Activated CD4-positive, alpha-beta T cell treated with anti-CD3 and anti-CD28 coated beads for 36 hours (primary cell): ENCODE measurements at regions of chr1 and their contacts with region 1.

Region 1: GRCh38 chr1:10507111-10507879 is 32.5 kb downstream of the PEX14 start:
- DNase-seq: peak; percentile 73
- ATAC-seq: peak; percentile 47
- H3K4me3 Mint-ChIP-seq: no peak overlapping the region
- H3K27ac Mint-ChIP-seq: no peak overlapping the region
- H3K4me1 Mint-ChIP-seq: peaks cover 51% of the 10 kb centered on the region
- H3K27me3 Mint-ChIP-seq: no peaks in the 10 kb centered on the region

Region 2: DNA sequence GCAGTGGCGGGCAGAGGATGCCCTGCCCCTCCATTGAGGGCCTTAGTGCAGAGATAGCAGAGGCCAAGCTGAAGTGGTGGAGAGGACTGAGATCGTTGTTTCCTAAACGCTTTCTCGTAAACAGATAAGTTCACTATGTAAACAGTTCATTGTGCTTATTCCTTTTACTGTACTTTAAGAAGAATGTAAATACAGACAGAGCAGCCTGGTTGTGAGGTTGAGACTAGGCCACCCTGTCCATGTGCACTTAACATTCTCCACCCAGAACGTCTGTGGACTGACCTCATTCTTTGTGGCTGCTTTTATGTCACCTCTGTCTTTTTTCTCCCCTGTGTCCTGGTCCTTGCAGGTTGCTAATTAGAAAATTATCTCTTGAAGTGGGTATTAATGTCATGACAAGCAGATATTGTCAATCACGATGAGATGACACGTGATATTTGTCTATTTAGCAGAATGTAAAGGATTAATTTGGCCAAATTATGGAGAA is 68.6 kb before region 1 on chr1:
- CTCF ChIA-PET with region 1: no interaction called
- POLR2A ChIA-PET with region 1: no interaction called
- intact Hi-C with region 1: no loop called
- DNase-seq: no peak
- ATAC-seq: no peak
- H3K4me3 Mint-ChIP-seq: no peak overlapping the region
- H3K27ac Mint-ChIP-seq: no peak overlapping the region
- H3K4me1 Mint-ChIP-seq: no peaks in the 10 kb centered on the region
- H3K27me3 Mint-ChIP-seq: no peaks in the 10 kb centered on the region

Region 3: DNA sequence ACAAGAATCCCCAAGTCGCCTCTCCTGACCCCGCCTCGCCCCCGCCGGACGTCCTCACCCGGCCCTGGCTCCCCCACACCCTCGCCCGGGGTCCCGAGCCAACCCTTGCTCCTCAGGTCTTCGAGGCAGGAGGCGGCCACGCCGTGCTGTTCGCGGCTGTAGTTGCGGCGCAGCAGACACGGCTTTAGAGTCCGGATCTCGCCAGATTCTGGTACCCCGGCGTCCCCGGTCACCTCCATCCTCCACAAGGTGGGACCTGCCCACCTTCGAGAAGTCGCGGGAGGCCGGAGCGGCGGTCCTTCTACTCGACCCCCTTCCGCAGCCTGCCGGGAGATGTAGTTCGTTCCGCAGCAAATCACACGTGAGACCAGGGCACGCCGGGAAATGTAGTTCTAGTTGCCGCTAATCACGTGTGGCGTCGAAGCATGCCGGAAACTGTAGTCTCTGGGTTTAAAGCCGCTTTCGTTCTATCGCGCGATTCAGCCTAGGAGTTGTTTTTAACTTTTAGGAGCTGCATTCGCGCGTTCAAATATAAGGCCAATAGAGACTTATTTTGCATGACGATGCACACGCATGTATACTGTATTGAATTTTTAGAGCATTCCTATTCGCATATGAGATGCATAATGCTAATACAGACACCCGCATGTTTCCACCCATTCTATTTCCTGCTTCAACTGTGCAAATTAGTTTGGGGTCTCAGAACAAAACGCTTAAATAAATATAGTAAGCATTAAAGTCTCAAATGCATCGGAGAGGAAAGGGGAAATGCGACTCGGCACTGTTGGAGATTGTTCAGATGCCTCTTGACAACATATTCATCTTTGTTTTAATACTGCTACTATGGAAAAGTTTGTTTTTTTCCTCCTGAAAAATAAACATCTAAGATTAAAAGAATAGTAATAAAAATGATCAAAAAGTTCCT is 34.8 kb before region 1 on chr1 and contains the start of gene DFFA:
- CTCF ChIA-PET with region 1: interaction called, 4 read pairs
- POLR2A ChIA-PET with region 1: no interaction called
- intact Hi-C with region 1: loop called (anchors 1 kb)
- DNase-seq: peak; percentile 96
- ATAC-seq: peak; percentile 83
- H3K4me3 Mint-ChIP-seq: peak within 1 kb of the TSS; percentile 97
- H3K27ac Mint-ChIP-seq: peak within 1 kb of the TSS; percentile 92
- H3K4me1 Mint-ChIP-seq: peaks cover 38% of the 10 kb centered on the region
- H3K27me3 Mint-ChIP-seq: no peaks in the 10 kb centered on the region
- total RNA-seq, gene DFFA: 45.7 to 46.4 TPM

Region 4: DNA sequence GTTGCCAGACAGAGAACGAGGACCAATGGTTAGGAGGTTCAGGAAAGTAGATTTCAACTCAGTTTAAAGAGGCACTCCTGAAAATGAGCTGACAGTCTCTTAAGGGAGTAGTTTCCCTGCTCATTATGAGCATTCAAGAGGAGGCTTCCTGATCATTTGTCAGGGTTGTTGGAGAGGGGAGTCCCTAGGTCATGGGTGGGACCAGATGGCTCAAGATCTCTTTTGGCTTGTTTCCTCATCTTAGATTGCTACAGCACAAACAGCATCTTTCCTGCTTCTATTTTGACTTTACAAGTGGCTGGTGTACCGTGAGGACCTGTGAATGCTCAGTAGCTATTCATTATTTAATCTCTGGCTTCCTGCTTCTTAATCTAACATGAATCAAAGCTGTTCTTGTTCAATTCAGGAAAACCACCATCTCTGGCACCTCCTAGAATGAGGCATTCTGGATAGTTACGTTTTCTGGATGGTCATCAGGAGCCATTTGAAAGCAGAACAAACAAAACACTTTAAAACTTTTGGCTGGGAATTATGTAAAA is 15.1 kb after region 1 on chr1:
- CTCF ChIA-PET with region 1: interaction called, 19 read pairs
- POLR2A ChIA-PET with region 1: interaction called, 4 read pairs
- intact Hi-C with region 1: no loop called
- DNase-seq: no peak
- ATAC-seq: no peak
- H3K4me3 Mint-ChIP-seq: no peak overlapping the region
- H3K27ac Mint-ChIP-seq: peak overlapping the region; percentile 39
- H3K4me1 Mint-ChIP-seq: peaks cover 35% of the 10 kb centered on the region
- H3K27me3 Mint-ChIP-seq: no peaks in the 10 kb centered on the region

Region 5: GRCh38 chr1:10731041-10731440 is 223.7 kb after region 1 on chr1:
- CTCF ChIA-PET with region 1: no interaction called
- POLR2A ChIA-PET with region 1: no interaction called
- intact Hi-C with region 1: loop called in 1 of 2 experiments (anchors 5 kb)
- DNase-seq: peak; percentile 29
- ATAC-seq: peak; percentile 63
- H3K4me3 Mint-ChIP-seq: no peak overlapping the region
- H3K27ac Mint-ChIP-seq: no peak overlapping the region
- H3K4me1 Mint-ChIP-seq: peaks cover 20% of the 10 kb centered on the region
- H3K27me3 Mint-ChIP-seq: no peaks in the 10 kb centered on the region

Region 6: DNA sequence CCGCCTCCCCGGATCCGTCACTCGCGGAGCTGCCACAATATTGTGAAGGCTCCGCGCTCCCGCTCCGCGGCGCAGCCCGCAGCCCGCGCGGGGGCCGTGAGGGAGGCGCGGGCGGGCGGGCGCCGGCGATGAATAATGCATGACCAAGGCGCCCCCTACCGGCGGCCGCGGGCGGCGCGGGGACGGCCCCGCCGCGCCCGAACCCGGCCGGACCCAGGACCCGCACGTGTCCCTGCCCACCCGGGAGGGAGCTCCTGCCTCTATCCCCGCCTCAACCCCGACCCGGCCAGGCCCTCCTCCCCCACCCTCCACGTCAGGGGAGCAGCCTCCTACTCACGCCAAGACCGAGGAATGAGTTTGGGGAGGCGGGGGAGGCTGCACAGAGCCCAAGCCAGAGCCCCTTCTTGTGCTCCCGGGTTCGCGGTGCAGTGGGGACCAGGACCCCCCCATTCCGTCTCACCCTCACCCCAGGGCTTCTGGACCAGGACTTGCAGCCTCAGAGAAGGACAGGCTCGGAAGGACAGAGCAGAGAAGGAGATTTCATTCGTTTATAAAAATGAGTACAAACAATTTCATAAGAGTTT is 359.9 kb after region 1 on chr1:
- CTCF ChIA-PET with region 1: interaction called, 8 read pairs
- POLR2A ChIA-PET with region 1: no interaction called
- intact Hi-C with region 1: loop called (anchors 2 to 5 kb)
- DNase-seq: peak; percentile 77
- ATAC-seq: peak; percentile 84
- H3K4me3 Mint-ChIP-seq: peak overlapping the region; percentile 43
- H3K27ac Mint-ChIP-seq: no peak overlapping the region
- H3K4me1 Mint-ChIP-seq: peaks cover 12% of the 10 kb centered on the region
- H3K27me3 Mint-ChIP-seq: peaks cover 51% of the 10 kb centered on the region

Region 7: DNA sequence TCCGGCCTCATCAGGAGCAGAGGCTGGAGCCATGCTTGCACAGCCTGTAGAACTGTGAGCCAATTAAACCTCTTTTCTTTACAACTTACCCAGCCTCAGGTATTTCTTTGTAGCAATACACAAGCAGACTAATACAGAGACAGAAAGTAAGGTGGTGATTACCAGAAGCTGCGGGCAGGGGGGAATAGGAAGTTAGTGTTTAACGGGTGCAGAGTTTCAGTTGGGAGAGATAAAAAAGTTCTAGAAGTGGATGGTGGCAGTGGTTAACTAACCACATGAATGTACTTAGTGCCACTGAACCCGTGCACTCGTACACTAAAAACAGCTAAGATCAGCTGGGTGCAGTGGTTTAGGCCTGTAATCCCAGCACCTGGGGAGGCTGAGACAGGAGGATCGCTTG is 424.8 kb after region 1 on chr1:
- CTCF ChIA-PET with region 1: interaction called, 5 read pairs
- POLR2A ChIA-PET with region 1: interaction called, 4 read pairs
- intact Hi-C with region 1: loop called in 1 of 2 experiments (anchors 1 kb)
- DNase-seq: peak; percentile 74
- ATAC-seq: peak; percentile 92
- H3K4me3 Mint-ChIP-seq: no peak overlapping the region
- H3K27ac Mint-ChIP-seq: no peak overlapping the region
- H3K4me1 Mint-ChIP-seq: peaks cover 10% of the 10 kb centered on the region
- H3K27me3 Mint-ChIP-seq: peaks cover 16% of the 10 kb centered on the region

Region 8: DNA sequence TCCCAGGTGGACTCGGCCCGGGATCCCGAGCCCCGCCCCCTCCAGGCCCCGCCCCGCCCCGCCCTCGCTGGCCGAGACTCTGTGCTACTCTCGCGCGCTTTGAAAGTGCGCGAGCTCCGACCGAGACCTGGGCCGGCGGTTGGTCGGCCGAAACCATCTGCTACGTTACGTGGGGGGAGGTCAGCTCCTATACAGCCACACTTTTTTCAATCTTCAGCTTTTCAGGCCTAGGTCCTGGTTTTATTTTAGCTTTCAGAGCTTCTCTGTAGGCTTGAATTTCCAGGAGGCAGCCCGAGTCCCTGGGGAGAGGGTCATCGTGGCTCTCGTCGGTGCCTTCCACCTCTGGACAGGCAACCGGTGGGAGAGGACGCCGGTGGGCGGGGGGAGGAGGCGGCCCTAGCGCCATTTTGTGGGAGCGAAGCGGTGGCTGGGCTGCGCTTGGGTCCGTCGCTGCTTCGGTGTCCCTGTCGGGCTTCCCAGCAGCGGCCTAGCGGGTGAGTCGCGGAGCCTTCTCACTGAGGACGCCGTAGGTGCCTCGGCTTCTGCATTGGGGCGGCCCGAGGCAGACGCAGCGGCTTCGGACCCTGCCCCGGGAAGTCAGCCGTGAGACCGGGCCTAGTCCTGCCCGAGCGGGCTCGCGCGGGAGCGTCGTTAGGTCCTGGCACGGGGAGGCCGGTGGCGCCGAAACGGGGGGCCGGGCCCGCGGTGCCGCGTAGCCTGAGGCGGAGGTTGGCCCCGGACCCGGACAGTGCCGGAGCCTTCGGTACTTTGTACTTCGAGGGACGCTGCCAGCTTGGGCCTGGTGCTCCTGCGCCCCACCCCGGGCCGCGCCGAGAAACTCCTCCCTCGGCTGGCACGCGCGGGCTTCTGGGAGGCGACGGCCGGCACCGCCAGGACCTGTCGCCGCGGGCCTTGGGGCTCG is 505.2 kb after region 1 on chr1 and contains the start of gene TARDBP:
- CTCF ChIA-PET with region 1: no interaction called
- POLR2A ChIA-PET with region 1: no interaction called
- intact Hi-C with region 1: loop called (anchors 5 to 10 kb)
- DNase-seq: peak; percentile 94
- ATAC-seq: peak; percentile 89
- H3K4me3 Mint-ChIP-seq: peak within 1 kb of the TSS; percentile 93
- H3K27ac Mint-ChIP-seq: peak within 1 kb of the TSS; percentile 99
- H3K4me1 Mint-ChIP-seq: peaks cover 30% of the 10 kb centered on the region
- H3K27me3 Mint-ChIP-seq: no peaks in the 10 kb centered on the region
- total RNA-seq, gene TARDBP: 180 to 190 TPM